CD14-positive monocyte (primary cell): ENCODE measurements at regions of chr10 and their contacts with region 1.

Region 1: GRCh38 chr10:54691331-54691730 is 109.7 kb downstream of the PCDH15 start:
- DNase-seq: no peak
- H3K4me3 ChIP-seq: no peak overlapping the region
- H3K4me3 Mint-ChIP-seq: no peak overlapping the region
- H3K27ac ChIP-seq: no peak overlapping the region
- H3K27ac Mint-ChIP-seq: no peak overlapping the region
- H3K4me1 ChIP-seq: no peaks in the 10 kb centered on the region
- H3K4me1 Mint-ChIP-seq: no peaks in the 10 kb centered on the region
- H3K27me3 ChIP-seq: no peaks in the 10 kb centered on the region
- H3K27me3 Mint-ChIP-seq: no peaks in the 10 kb centered on the region
- CTCF ChIP-seq: no peak

Region 2: DNA sequence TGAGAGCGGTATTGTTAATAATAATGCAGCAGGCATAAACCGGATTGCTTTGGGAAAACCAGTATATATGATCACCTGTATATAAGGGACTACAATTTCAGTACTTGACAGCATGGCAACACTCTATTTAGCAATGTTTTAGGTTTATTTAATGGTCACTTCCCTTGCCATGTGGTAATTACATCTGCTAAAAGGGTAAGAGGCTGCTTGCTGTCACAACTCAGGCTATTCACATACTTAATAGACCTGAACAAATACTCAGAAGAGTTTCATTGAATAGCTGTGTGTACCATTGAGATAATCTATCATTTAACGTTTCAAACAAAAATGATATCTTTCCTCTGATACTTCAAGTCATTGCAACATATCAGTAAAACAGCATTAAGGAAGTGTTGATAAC is 19.6 kb after region 1 on chr10:
- intact Hi-C with region 1: loop called in 1 of 2 experiments (anchors 1 kb)
- DNase-seq: no peak
- H3K4me3 ChIP-seq: no peak overlapping the region
- H3K4me3 Mint-ChIP-seq: no peak overlapping the region
- H3K27ac ChIP-seq: no peak overlapping the region
- H3K27ac Mint-ChIP-seq: no peak overlapping the region
- H3K4me1 ChIP-seq: no peaks in the 10 kb centered on the region
- H3K4me1 Mint-ChIP-seq: no peaks in the 10 kb centered on the region
- H3K27me3 ChIP-seq: no peaks in the 10 kb centered on the region
- H3K27me3 Mint-ChIP-seq: no peaks in the 10 kb centered on the region
- CTCF ChIP-seq: no peak